Activated CD4-positive, alpha-beta memory T cell treated with anti-CD3 and anti-CD28 coated beads for 36 hours (primary cell): ENCODE measurements at regions of chr17 and their contacts with region 1.

Region 1: DNA sequence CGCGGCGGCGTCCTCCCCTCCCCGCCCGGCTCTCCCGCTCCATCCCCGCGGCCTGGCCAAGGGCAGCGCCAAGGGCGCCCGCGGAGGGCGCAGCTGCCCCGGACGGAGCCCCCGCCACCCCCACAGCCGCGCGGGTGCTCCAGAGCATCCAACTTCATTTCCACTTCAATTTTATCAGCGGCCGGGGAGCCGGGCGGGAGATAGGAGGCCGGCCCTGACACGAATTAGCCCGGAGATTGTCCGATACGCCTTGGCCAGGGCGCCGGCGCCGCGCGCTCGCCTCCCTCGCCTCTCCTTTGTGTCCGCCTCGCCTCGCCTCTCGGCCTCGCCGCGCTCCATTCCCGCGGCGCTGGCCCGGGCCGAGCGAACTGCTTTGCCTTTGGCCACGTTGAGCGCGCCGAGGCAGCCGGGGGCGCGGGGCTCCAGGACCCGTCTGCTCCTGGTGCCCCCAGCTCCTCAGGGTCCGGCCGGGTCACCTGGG is 129.1 kb upstream of the LHX1 start:
- DNase-seq: no peak
- H3K4me3 Mint-ChIP-seq: no peak overlapping the region
- H3K27ac Mint-ChIP-seq: no peak overlapping the region
- H3K4me1 Mint-ChIP-seq: peaks cover 1% of the 10 kb centered on the region
- H3K27me3 Mint-ChIP-seq: peaks cover 53% of the 10 kb centered on the region

Region 2: GRCh38 chr17:36755586-36755985 is 52.6 kb before region 1 on chr17:
- CTCF ChIA-PET with region 1: no interaction called
- POLR2A ChIA-PET with region 1: no interaction called
- intact Hi-C with region 1: no loop called
- DNase-seq: peak; percentile 58
- H3K4me3 Mint-ChIP-seq: no peak overlapping the region
- H3K27ac Mint-ChIP-seq: no peak overlapping the region
- H3K4me1 Mint-ChIP-seq: no peaks in the 10 kb centered on the region
- H3K27me3 Mint-ChIP-seq: no peaks in the 10 kb centered on the region

Region 3: GRCh38 chr17:36934692-36935630 is 126.7 kb after region 1 on chr17:
- CTCF ChIA-PET with region 1: no interaction called
- POLR2A ChIA-PET with region 1: no interaction called
- intact Hi-C with region 1: loop called (anchors 5 kb)
- DNase-seq: no peak
- H3K4me3 Mint-ChIP-seq: peak overlapping the region; percentile 5
- H3K27ac Mint-ChIP-seq: no peak overlapping the region
- H3K4me1 Mint-ChIP-seq: peaks cover 72% of the 10 kb centered on the region
- H3K27me3 Mint-ChIP-seq: peaks cover 90% of the 10 kb centered on the region